Activated B cell treated with CpG ODN at 0.5 μM for 24 hours (primary cell): ENCODE measurements at regions of chr11 and their contacts with region 1.

Region 1: DNA sequence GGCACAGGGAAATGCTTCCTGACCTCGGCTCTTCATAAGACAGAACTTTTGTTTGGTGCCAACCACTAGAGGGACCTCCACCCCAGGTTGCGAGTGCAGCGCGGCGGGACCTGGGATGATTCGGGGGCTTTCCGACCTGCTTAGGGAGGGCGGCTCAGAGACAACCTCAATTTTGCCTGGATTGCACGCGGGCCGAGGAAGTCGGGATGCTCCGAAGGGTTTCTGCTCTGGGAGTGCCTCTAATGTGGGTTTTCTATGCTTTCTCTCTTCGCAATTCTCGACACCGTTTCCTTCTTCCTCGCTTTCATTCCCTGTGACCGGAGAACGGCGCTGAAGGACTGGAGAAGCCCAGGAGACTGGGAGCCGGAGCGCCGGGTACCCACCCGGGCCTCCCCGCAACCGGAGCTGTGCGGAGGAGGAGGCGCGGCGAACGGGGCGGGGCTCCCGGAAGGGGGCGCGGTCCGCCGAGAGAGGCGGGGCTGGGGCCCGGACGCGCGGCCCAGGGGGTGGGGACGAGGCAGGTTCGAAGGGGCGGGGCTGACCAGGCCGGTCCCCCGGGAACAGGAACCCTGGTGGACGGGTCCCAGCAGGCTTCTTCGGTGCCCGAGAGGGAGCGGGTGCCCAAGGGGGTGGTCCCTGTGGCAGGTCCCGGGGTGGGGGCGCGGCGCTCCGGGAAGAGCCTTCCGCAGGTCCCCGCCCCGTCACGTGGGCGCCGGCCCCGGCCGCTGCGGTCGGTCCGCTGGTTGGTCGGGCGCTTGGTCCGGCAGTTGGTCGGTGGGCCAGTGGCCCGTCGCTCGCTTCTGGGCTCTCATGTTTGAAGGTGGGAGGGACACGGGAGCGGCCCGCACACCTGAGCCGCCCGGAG is at the start of gene PPFIBP2:
- DNase-seq: peak; percentile 94
- ATAC-seq: peak; percentile 69
- H3K4me3 Mint-ChIP-seq: peak within 1 kb of the TSS; percentile 92
- H3K27ac Mint-ChIP-seq: peak within 1 kb of the TSS; percentile 97
- H3K4me1 Mint-ChIP-seq: peaks cover 47% of the 10 kb centered on the region
- H3K27me3 Mint-ChIP-seq: no peaks in the 10 kb centered on the region
- CTCF ChIP-seq: no peak
- total RNA-seq, gene PPFIBP2: 109 and 112 TPM in 2 replicates

Region 2: GRCh38 chr11:6473481-6474422 is 1039.7 kb before region 1 on chr11 and contains the start of gene TRIM3:
- CTCF ChIA-PET with region 1: no interaction called
- POLR2A ChIA-PET with region 1: no interaction called
- intact Hi-C with region 1: loop called (anchors 5 kb)
- DNase-seq: peak; percentile 75
- ATAC-seq: peak; percentile 91
- H3K4me3 Mint-ChIP-seq: peak within 1 kb of the TSS; percentile 86
- H3K27ac Mint-ChIP-seq: peak within 1 kb of the TSS; percentile 82
- H3K4me1 Mint-ChIP-seq: peaks cover 17% of the 10 kb centered on the region
- H3K27me3 Mint-ChIP-seq: no peaks in the 10 kb centered on the region
- CTCF ChIP-seq: no peak
- total RNA-seq, gene TRIM3: 8.3 and 9.0 TPM in 2 replicates

Region 3: GRCh38 chr11:7353100-7353499 is 160.4 kb before region 1 on chr11:
- CTCF ChIA-PET with region 1: interaction called, 3 read pairs
- POLR2A ChIA-PET with region 1: no interaction called
- intact Hi-C with region 1: loop called (anchors 1 kb)
- DNase-seq: peak; percentile 23
- ATAC-seq: peak; percentile 62
- H3K4me3 Mint-ChIP-seq: no peak overlapping the region
- H3K27ac Mint-ChIP-seq: no peak overlapping the region
- H3K4me1 Mint-ChIP-seq: peaks cover 3% of the 10 kb centered on the region
- H3K27me3 Mint-ChIP-seq: peaks cover 7% of the 10 kb centered on the region
- CTCF ChIP-seq: no peak

Region 4: DNA sequence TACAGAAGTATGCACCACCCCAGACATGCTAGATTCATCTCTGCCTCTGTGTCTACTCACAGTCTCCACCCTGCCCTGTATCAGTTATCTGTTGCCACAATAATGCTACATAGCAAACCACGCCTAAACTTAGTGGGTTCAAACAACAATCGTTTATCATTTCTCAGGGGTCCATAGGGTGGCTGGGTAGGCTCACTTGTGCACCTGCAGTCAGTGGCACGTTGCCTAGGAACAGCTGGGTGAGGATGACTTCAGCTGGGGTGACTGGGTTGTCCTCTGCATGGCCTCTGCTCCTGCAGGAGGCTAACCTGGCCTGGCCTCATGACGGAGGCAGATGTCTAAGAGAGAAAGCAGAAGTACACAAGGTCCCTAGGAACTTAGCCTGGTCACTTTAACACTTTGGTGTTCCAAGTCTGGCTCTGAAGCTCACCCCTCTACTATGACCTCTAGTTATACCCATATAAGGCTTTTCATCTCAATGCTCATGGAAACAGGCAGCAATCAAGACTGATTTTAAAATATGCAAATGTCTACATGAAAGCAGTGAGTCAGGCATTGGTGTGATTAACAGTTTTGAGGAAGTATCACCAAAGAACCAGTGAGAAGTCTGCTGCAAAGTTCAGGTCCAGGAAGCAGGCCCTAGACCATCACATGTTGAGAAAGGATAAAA is 17.4 kb before region 1 on chr11:
- CTCF ChIA-PET with region 1: interaction called, 11 read pairs
- POLR2A ChIA-PET with region 1: interaction called, 91 read pairs
- intact Hi-C with region 1: loop called (anchors 1 kb)
- DNase-seq: peak; percentile 49
- ATAC-seq: peak; percentile 78
- H3K4me3 Mint-ChIP-seq: peak overlapping the region; percentile 68
- H3K27ac Mint-ChIP-seq: peak overlapping the region; percentile 94
- H3K4me1 Mint-ChIP-seq: peaks cover 79% of the 10 kb centered on the region
- H3K27me3 Mint-ChIP-seq: no peaks in the 10 kb centered on the region
- CTCF ChIP-seq: no peak

Region 5: GRCh38 chr11:7571640-7572000 is 58.2 kb after region 1 on chr11:
- CTCF ChIA-PET with region 1: interaction called, 4 read pairs
- POLR2A ChIA-PET with region 1: interaction called, 3 read pairs
- intact Hi-C with region 1: loop called (anchors 2 kb)
- DNase-seq: no peak
- ATAC-seq: peak; percentile 21
- H3K4me3 Mint-ChIP-seq: no peak overlapping the region
- H3K27ac Mint-ChIP-seq: no peak overlapping the region
- H3K4me1 Mint-ChIP-seq: peaks cover 26% of the 10 kb centered on the region
- H3K27me3 Mint-ChIP-seq: no peaks in the 10 kb centered on the region
- CTCF ChIP-seq: no peak

Region 6: DNA sequence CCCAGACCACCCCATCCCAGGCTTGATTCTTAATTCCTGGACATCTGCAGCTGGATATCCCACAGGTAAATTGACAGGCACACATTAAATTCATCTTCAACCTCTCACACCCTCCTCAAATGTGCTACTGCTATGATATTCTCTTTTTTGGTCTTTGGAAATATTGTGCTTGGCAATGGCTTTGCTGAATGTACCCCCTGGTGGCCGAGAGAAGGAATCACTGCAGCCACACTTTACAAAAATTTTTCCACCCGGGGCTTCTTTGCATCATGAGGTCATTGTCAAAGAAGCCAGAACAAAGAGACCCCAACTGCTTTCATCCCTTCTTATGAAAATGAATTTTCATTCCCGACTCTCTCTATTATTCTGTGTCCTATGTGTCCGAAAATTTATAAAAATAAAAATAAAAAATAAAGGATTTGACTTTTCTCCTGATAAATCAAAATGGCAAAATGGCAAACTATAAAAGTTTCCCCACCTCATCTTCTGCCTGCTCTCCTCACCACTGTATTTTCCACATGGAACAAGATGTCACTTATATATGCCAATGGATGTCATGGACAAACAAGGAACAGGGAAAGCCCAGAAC is 174.9 kb after region 1 on chr11:
- CTCF ChIA-PET with region 1: interaction called, 3 read pairs
- POLR2A ChIA-PET with region 1: no interaction called
- intact Hi-C with region 1: loop called (anchors 2 kb)
- DNase-seq: no peak
- ATAC-seq: peak; percentile 58
- H3K4me3 Mint-ChIP-seq: no peak overlapping the region
- H3K27ac Mint-ChIP-seq: no peak overlapping the region
- H3K4me1 Mint-ChIP-seq: no peaks in the 10 kb centered on the region
- H3K27me3 Mint-ChIP-seq: peaks cover 12% of the 10 kb centered on the region
- CTCF ChIP-seq: peak; percentile 59